ENCODE measurements at regions of chr1 and their contacts with region 1.

Region 1: GRCh38 chr1:161225534-161226319 is at the start of gene TOMM40L:
- DNase-seq: peak; percentile 75 to 97 (median 87)
- ATAC-seq: peak; percentile 94 to 97 (median 94)
- H3K4me3 ChIP-seq: peak within 1 kb of the TSS; percentile 71 to 86
- H3K4me3 Mint-ChIP-seq: peak within 1 kb of the TSS; percentile 89 to 100 (median 99)
- H3K27ac ChIP-seq: peak within 1 kb of the TSS; percentile 75
- H3K27ac Mint-ChIP-seq: peak within 1 kb of the TSS; percentile 96 to 98
- H3K4me1 ChIP-seq: peaks cover 15 to 31% of the 10 kb centered on the region in 2 experiments
- H3K4me1 Mint-ChIP-seq: peaks cover 36 to 48% (median 38%) of the 10 kb centered on the region in 3 donors
- H3K27me3 ChIP-seq: no peaks in the 10 kb centered on the region
- H3K27me3 Mint-ChIP-seq: no peaks in the 10 kb centered on the region
- total RNA-seq, gene TOMM40L: 6.3 to 12.2 (median 11.0) TPM

Region 2: GRCh38 chr1:161021165-161021960 is 204.4 kb before region 1 on chr1:
- CTCF ChIA-PET with region 1: interaction called in 1 of 2 experiments, 12 read pairs
- POLR2A ChIA-PET with region 1: no interaction called
- DNase-seq: peak; percentile 72 to 94 (median 91)
- ATAC-seq: peak; percentile 94 to 97 (median 95)
- H3K4me3 ChIP-seq: peak overlapping the region; percentile 74 to 83
- H3K4me3 Mint-ChIP-seq: peak overlapping the region; percentile 92 to 94 (median 94)
- H3K27ac ChIP-seq: peak overlapping the region; percentile 64
- H3K27ac Mint-ChIP-seq: peak overlapping the region; percentile 82 to 93
- H3K4me1 ChIP-seq: peaks cover 10 to 19% of the 10 kb centered on the region in 2 experiments
- H3K4me1 Mint-ChIP-seq: peaks cover 29 to 49% (median 40%) of the 10 kb centered on the region in 3 donors
- H3K27me3 ChIP-seq: no peaks in the 10 kb centered on the region
- H3K27me3 Mint-ChIP-seq: no peaks in the 10 kb centered on the region

Region 3: GRCh38 chr1:161192476-161193465 is 33.0 kb before region 1 on chr1:
- CTCF ChIA-PET with region 1: interaction called, 10 to 16 read pairs
- POLR2A ChIA-PET with region 1: no interaction called
- DNase-seq: peak; percentile 40 to 85 (median 61)
- ATAC-seq: peak; percentile 93 to 95 (median 94)
- H3K4me3 ChIP-seq: no peak overlapping the region
- H3K4me3 Mint-ChIP-seq: peak overlapping the region in 1 of 3 donors; percentile 54
- H3K27ac ChIP-seq: no peak overlapping the region
- H3K27ac Mint-ChIP-seq: peak overlapping the region; percentile 89 to 93
- H3K4me1 ChIP-seq: peaks cover 16 to 73% of the 10 kb centered on the region in 2 experiments
- H3K4me1 Mint-ChIP-seq: peaks cover 42 to 52% (median 43%) of the 10 kb centered on the region in 3 donors
- H3K27me3 ChIP-seq: no peaks in the 10 kb centered on the region
- H3K27me3 Mint-ChIP-seq: no peaks in the 10 kb centered on the region

Region 4: DNA sequence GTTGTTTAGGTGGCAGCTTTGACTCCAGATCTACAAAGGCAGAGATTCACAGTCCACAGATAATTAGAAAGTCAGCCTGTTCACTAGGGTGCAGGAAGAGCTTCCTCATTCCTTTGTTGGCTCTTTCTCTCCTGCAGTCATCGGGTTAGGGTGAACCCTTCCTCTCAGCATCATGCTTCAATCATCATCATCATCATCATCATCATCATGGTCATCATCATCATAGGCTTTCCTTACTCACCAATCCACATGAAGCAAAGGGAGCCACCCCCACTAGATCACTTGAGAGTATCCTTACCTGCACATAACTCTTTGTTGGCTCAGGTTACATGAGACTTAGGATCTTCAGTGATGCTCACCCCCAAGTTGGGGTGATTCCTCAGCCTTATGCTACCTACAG is 65.1 kb after region 1 on chr1:
- CTCF ChIA-PET with region 1: interaction called, 6 to 29 read pairs
- POLR2A ChIA-PET with region 1: no interaction called
- DNase-seq: no peak
- ATAC-seq: no peak
- H3K4me3 ChIP-seq: no peak overlapping the region
- H3K4me3 Mint-ChIP-seq: no peak overlapping the region
- H3K27ac ChIP-seq: no peak overlapping the region
- H3K27ac Mint-ChIP-seq: no peak overlapping the region
- H3K4me1 ChIP-seq: no peaks in the 10 kb centered on the region
- H3K4me1 Mint-ChIP-seq: peaks cover 0 to 6% (median 0%) of the 10 kb centered on the region in 3 donors
- H3K27me3 ChIP-seq: no peaks in the 10 kb centered on the region
- H3K27me3 Mint-ChIP-seq: peaks cover 0 to 3% of the 10 kb centered on the region in 2 donors

Region 5: DNA sequence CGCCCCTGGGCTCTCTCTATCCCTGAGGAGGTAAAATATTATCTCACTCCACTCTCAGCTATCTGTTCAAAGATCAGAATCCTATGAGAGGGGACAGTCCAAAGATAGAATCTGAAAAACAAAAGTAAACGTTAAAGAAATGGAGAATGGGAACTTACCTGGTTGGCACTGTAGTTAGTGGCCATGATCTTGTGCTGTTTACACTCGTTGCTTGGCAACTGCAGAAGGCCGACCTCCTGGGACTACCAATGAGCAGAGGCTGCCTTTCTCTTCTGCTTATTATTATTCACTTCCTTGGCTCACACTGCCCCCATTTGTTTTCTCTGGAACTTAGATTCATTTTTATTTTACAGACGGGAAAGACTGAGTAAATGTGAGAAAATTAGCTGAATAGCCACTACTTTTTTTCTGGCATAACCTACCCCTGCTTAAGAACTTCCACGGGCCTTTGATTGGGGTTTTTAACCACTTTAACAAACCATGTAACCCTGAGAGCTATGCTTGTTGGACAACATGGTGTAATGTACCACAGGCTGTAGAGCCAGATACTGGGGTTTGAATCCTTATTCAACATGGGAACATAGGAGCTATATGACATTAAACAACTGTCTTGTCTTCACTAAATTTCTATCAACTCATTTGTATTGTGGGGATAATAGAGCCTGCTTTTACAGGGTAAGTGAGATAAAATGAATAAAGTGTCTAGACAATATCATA is 142.1 kb after region 1 on chr1 and contains the start of gene CFAP126:
- CTCF ChIA-PET with region 1: interaction called in 1 of 2 experiments, 7 read pairs
- POLR2A ChIA-PET with region 1: interaction called in 1 of 2 experiments, 13 read pairs
- DNase-seq: peak in 32 of 35 experiments; percentile 9 to 77 (median 51)
- ATAC-seq: peak; percentile 89 to 100 (median 92)
- H3K4me3 ChIP-seq: no peak within 1 kb of the TSS
- H3K4me3 Mint-ChIP-seq: no peak within 1 kb of the TSS
- H3K27ac ChIP-seq: peak within 1 kb of the TSS; percentile 48
- H3K27ac Mint-ChIP-seq: peak within 1 kb of the TSS; percentile 60 to 68
- H3K4me1 ChIP-seq: no peaks in the 10 kb centered on the region
- H3K4me1 Mint-ChIP-seq: peaks cover 8 to 16% (median 8%) of the 10 kb centered on the region in 3 donors
- H3K27me3 ChIP-seq: no peaks in the 10 kb centered on the region
- H3K27me3 Mint-ChIP-seq: no peaks in the 10 kb centered on the region
- total RNA-seq, gene CFAP126: not detected

Region 6: DNA sequence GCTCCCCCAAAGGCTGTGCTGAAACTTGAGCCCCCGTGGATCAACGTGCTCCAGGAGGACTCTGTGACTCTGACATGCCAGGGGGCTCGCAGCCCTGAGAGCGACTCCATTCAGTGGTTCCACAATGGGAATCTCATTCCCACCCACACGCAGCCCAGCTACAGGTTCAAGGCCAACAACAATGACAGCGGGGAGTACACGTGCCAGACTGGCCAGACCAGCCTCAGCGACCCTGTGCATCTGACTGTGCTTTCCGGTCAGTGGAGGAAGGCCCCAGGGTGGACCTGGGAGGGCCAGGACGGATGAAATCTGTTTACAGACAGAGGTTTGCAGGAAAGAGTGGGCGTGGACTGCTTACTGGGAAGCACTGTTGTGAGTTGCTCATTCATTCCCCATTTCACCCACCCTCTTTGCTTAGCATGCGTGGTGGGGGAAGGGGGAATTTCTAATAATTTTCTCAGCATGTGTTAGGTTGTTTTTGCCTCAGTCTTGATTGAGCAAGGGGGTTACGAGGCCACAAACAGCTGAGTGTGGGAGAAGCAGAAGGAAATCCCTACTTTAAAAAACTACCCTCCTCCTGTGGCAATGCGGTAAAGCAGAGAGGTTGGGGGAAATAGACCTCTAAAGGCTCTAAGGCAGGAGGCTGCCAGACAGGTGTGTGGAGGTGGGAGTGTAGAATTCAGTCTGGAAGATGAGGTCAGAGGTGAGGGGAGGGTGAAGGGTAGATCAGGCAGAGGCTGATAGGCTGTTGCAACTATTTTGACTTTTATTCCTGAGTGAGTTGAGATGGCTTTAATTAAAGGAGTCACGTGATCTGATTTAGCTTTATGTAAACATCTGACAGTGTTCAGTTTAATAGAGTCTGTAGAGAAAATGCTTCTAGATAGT is 280.9 kb after region 1 on chr1:
- CTCF ChIA-PET with region 1: no interaction called
- POLR2A ChIA-PET with region 1: no interaction called
- DNase-seq: no peak
- ATAC-seq: no peak
- H3K4me3 ChIP-seq: no peak overlapping the region
- H3K4me3 Mint-ChIP-seq: no peak overlapping the region
- H3K27ac ChIP-seq: no peak overlapping the region
- H3K27ac Mint-ChIP-seq: no peak overlapping the region
- H3K4me1 ChIP-seq: peaks cover 0 to 2% of the 10 kb centered on the region in 2 experiments
- H3K4me1 Mint-ChIP-seq: peaks cover 0 to 8% (median 0%) of the 10 kb centered on the region in 3 donors
- H3K27me3 ChIP-seq: peaks cover 2 to 8% of the 10 kb centered on the region in 2 experiments
- H3K27me3 Mint-ChIP-seq: peaks cover 27 to 32% of the 10 kb centered on the region in 2 donors

Region 7: GRCh38 chr1:161915051-161915503 is 689.4 kb after region 1 on chr1:
- CTCF ChIA-PET with region 1: interaction called in 1 of 2 experiments, 14 read pairs
- POLR2A ChIA-PET with region 1: interaction called in 1 of 2 experiments, 12 read pairs
- DNase-seq: no peak
- ATAC-seq: no peak
- H3K4me3 ChIP-seq: no peak overlapping the region
- H3K4me3 Mint-ChIP-seq: no peak overlapping the region
- H3K27ac ChIP-seq: no peak overlapping the region
- H3K27ac Mint-ChIP-seq: no peak overlapping the region
- H3K4me1 ChIP-seq: peaks cover 0 to 9% of the 10 kb centered on the region in 2 experiments
- H3K4me1 Mint-ChIP-seq: peaks cover 25 to 33% (median 29%) of the 10 kb centered on the region in 3 donors
- H3K27me3 ChIP-seq: no peaks in the 10 kb centered on the region
- H3K27me3 Mint-ChIP-seq: no peaks in the 10 kb centered on the region